ENCODE measurements at regions of chr12 and their contacts with region 1.

Region 1: DNA sequence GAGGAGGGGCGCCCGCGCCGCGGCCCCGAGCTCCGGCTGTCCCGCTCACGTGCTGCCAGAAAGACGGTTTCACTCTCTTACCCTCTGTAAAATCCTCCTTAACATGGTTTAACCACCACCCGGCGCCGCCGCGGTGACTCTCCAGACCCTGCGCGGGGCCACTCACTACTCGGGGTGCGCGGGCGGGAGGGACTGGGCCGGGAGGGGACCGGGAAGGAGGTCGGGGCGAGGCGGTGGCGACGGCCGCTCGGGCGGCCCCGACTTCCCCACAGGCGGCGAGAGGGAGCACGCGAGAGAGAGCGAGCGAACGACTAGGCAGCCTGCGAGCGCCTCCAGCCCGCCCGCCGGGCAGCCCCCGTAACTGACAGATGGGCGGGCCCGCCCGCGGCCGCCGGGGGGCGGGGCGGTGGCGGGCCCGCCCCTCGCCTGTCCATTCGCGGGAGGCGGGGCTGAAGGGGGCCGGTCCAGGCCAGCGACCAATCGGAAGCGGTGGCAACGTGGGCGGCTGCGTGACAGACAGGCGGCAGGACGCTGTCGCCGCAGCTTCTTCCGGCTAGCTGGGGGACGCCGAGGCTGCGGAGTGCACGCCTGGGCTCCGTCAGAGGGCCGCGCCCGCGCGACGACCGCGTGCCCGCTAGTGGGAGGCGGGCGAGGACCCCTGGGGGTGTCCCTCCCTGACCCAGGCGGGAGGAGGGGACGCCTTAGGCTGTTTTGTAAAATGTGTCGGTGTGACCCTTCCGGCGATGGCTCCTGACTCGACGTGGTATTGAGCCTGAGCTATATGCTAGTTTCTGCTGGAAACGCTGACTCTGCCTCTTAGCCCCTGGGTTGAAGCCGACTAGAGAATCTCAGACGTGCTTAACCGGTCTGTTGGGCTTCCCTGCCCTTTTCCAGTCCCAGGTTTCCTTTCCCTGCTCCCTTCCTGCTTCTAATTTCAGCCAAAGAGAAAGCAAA is at the start of gene EEA1:
- DNase-seq: peak; percentile 98
- H3K4me3 Mint-ChIP-seq: peak within 1 kb of the TSS; percentile 85
- H3K27ac Mint-ChIP-seq: peak within 1 kb of the TSS; percentile 95
- H3K4me1 Mint-ChIP-seq: peaks cover 32% of the 10 kb centered on the region
- H3K27me3 Mint-ChIP-seq: no peaks in the 10 kb centered on the region
- total RNA-seq, gene EEA1: 17.5 to 17.7 TPM

Region 2: GRCh38 chr12:92784795-92785562 is 144.3 kb before region 1 on chr12:
- CTCF ChIA-PET with region 1: no interaction called
- POLR2A ChIA-PET with region 1: interaction called, 4 read pairs
- intact Hi-C with region 1: loop called (anchors 1 kb)
- DNase-seq: no peak
- H3K4me3 Mint-ChIP-seq: no peak overlapping the region
- H3K27ac Mint-ChIP-seq: no peak overlapping the region
- H3K4me1 Mint-ChIP-seq: no peaks in the 10 kb centered on the region
- H3K27me3 Mint-ChIP-seq: no peaks in the 10 kb centered on the region

Region 3: GRCh38 chr12:92844151-92844763 is 85.0 kb before region 1 on chr12:
- CTCF ChIA-PET with region 1: no interaction called
- POLR2A ChIA-PET with region 1: no interaction called
- intact Hi-C with region 1: no loop called
- DNase-seq: no peak
- H3K4me3 Mint-ChIP-seq: no peak overlapping the region
- H3K27ac Mint-ChIP-seq: no peak overlapping the region
- H3K4me1 Mint-ChIP-seq: no peaks in the 10 kb centered on the region
- H3K27me3 Mint-ChIP-seq: no peaks in the 10 kb centered on the region

Region 4: DNA sequence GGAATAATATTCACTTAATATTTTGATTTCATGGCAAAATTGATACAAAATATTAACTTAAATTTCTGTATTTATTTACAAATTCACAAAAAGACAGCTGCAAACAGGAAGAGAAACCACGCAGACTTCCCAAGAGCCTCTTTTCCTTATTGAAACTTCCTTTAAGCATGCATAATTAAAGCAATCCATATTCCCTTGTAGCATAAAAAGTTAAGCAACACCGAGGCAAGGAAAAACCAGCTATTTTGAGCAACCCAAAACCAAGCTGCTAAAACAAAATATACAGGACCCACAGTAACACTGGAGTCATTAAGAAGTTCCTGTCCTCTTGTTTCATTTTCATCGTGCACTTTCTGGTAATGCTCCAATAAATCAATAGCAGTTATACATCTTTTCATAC is 58.1 kb before region 1 on chr12:
- CTCF ChIA-PET with region 1: no interaction called
- POLR2A ChIA-PET with region 1: no interaction called
- intact Hi-C with region 1: no loop called
- DNase-seq: no peak
- H3K4me3 Mint-ChIP-seq: no peak overlapping the region
- H3K27ac Mint-ChIP-seq: no peak overlapping the region
- H3K4me1 Mint-ChIP-seq: peaks cover 9% of the 10 kb centered on the region
- H3K27me3 Mint-ChIP-seq: no peaks in the 10 kb centered on the region

Region 5: GRCh38 chr12:92912052-92912451 is 17.2 kb before region 1 on chr12:
- CTCF ChIA-PET with region 1: interaction called, 4 read pairs
- POLR2A ChIA-PET with region 1: interaction called, 36 read pairs
- intact Hi-C with region 1: loop called (anchors 1 kb)
- DNase-seq: no peak
- H3K4me3 Mint-ChIP-seq: no peak overlapping the region
- H3K27ac Mint-ChIP-seq: peak overlapping the region; percentile 9
- H3K4me1 Mint-ChIP-seq: peaks cover 48% of the 10 kb centered on the region
- H3K27me3 Mint-ChIP-seq: no peaks in the 10 kb centered on the region

Region 6: DNA sequence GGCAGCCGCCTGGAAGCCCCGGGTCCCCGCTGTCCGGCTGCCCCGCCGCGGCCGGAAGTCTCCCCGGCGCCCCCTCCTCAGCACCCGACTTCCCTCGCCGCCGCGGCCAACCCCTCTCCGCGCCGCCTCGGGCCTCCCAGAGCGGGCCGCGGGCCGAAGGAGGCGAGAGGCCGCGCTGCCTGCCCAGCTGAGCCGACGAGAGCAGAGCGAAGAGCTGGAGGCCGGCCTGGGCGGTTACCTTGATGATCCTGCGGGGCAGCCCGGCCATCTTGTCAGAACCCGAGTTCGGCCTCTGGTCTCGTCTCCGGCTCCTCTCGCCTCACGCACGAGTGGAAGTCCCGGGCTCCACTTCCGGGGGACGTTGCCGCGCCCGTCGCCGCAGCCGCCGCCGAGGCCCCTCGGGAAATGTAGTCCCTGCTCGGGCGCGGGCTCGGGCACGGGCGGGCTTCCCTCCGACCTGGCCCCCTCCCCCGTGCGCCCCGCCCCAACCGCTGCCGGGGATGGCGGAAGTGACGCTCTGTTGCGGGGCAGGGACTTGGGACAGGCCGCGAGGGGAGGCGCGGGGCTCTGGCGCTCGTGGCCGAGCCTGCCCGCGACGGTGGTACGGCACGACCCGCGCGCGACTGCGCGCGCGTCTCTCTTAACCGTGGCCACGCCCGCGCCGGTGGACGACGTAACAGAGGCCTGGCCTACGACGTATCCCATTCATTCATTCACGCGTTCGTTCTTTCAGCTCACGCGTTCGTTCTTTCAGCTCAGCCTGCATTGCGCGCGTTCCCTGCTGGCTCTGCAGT is 512.6 kb after region 1 on chr12 and contains the start of gene UBE2N:
- CTCF ChIA-PET with region 1: no interaction called
- POLR2A ChIA-PET with region 1: interaction called, 3 read pairs
- intact Hi-C with region 1: loop called (anchors 1 kb)
- DNase-seq: peak; percentile 97
- H3K4me3 Mint-ChIP-seq: peak within 1 kb of the TSS; percentile 94
- H3K27ac Mint-ChIP-seq: peak within 1 kb of the TSS; percentile 95
- H3K4me1 Mint-ChIP-seq: peaks cover 46% of the 10 kb centered on the region
- H3K27me3 Mint-ChIP-seq: no peaks in the 10 kb centered on the region
- total RNA-seq, gene UBE2N: 177 TPM

Measured in activated CD4-positive, alpha-beta memory T cell treated with anti-CD3 and anti-CD28 coated beads for 36 hours (primary cell).